Activated T-helper 1 cell treated with anti-CD3 and anti-CD28 coated beads, Interleukin-12 subunit alpha, Interleukin-12 subunit beta, Interleukin-2, Interleukin-4 antibody, amounts not matched to agents 30 ng/mL and 10 ng/mL and 1 ng/mL, durations not matched to agents 14 hours and 24 hours and 36 hours (primary cell): ENCODE measurements at regions of chr9 and their contacts with region 1.

Region 1: GRCh38 chr9:19493174-19493811 is 84.5 kb downstream of the ACER2 start:
- DNase-seq: peak; percentile 25
- H3K4me3 Mint-ChIP-seq: peak overlapping the region; percentile 9
- H3K27ac Mint-ChIP-seq: no peak overlapping the region
- H3K4me1 Mint-ChIP-seq: peaks cover 17% of the 10 kb centered on the region
- H3K27me3 Mint-ChIP-seq: peaks cover 12% of the 10 kb centered on the region

Region 2: GRCh38 chr9:19116107-19116790 is 377.0 kb before region 1 on chr9:
- intact Hi-C with region 1: no loop called
- DNase-seq: no peak
- H3K4me3 Mint-ChIP-seq: no peak overlapping the region
- H3K27ac Mint-ChIP-seq: no peak overlapping the region
- H3K4me1 Mint-ChIP-seq: no peaks in the 10 kb centered on the region
- H3K27me3 Mint-ChIP-seq: no peaks in the 10 kb centered on the region

Region 3: DNA sequence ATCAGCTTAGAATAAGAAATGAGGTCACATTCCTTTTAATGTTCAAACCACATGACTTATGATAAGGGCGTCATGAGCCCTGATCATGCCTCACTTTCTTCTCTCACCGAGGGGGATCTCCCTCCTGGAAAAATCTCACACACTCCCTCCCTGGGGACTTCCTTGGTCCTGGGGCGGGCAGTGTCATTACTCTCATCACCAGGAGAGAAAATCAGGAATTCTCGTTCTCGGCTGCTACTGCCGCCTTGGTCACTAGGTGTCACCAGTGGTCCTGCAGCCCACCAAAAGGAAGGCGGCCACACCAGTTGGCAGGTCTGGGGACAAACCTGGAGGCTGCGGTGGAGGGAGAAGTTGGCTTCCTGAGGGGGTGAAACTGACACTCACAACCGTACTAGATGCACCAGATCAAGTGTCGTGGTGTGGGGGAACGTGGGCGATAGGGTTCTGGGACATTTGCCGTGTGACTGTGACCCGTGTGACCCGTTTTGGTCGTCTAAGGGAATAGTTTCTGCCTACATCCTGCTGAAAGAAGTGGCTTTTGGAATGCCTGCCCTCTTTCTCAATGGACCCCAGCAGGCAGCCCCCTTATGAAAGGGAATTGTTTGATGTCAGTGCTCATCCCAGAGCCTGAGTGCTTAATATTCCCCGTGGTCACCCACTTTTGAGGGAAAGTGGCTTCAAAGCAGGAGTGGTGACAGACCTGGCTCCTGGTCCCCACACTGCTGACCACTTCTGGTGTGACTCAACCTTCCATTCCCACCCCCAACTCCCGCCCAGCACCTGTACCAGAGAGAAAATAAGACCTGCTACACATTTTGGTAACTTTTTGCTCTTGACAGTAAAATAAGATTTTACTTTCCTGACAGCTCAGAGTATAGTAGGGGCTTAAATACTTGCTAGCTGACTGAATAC is 21.3 kb before region 1 on chr9:
- intact Hi-C with region 1: loop called (anchors 1 kb)
- DNase-seq: no peak
- H3K4me3 Mint-ChIP-seq: no peak overlapping the region
- H3K27ac Mint-ChIP-seq: peak overlapping the region; percentile 4
- H3K4me1 Mint-ChIP-seq: peaks cover 19% of the 10 kb centered on the region
- H3K27me3 Mint-ChIP-seq: peaks cover 15% of the 10 kb centered on the region

Region 4: GRCh38 chr9:19517202-19517942 is 24.1 kb after region 1 on chr9:
- intact Hi-C with region 1: loop called (anchors 1 kb)
- DNase-seq: no peak
- H3K4me3 Mint-ChIP-seq: no peak overlapping the region
- H3K27ac Mint-ChIP-seq: no peak overlapping the region
- H3K4me1 Mint-ChIP-seq: peaks cover 27% of the 10 kb centered on the region
- H3K27me3 Mint-ChIP-seq: peaks cover under 1% of the 10 kb centered on the region

Region 5: GRCh38 chr9:19665146-19665863 is 172.0 kb after region 1 on chr9:
- intact Hi-C with region 1: loop called (anchors 10 kb)
- DNase-seq: peak; percentile 2
- H3K4me3 Mint-ChIP-seq: no peak overlapping the region
- H3K27ac Mint-ChIP-seq: peak overlapping the region; percentile 27
- H3K4me1 Mint-ChIP-seq: peaks cover 10% of the 10 kb centered on the region
- H3K27me3 Mint-ChIP-seq: peaks cover 3% of the 10 kb centered on the region

Region 6: GRCh38 chr9:19748278-19749126 is 255.2 kb after region 1 on chr9:
- intact Hi-C with region 1: loop called (anchors 10 kb)
- DNase-seq: peak; percentile 9
- H3K4me3 Mint-ChIP-seq: no peak overlapping the region
- H3K27ac Mint-ChIP-seq: no peak overlapping the region
- H3K4me1 Mint-ChIP-seq: peaks cover 22% of the 10 kb centered on the region
- H3K27me3 Mint-ChIP-seq: peaks cover 14% of the 10 kb centered on the region

Region 7: DNA sequence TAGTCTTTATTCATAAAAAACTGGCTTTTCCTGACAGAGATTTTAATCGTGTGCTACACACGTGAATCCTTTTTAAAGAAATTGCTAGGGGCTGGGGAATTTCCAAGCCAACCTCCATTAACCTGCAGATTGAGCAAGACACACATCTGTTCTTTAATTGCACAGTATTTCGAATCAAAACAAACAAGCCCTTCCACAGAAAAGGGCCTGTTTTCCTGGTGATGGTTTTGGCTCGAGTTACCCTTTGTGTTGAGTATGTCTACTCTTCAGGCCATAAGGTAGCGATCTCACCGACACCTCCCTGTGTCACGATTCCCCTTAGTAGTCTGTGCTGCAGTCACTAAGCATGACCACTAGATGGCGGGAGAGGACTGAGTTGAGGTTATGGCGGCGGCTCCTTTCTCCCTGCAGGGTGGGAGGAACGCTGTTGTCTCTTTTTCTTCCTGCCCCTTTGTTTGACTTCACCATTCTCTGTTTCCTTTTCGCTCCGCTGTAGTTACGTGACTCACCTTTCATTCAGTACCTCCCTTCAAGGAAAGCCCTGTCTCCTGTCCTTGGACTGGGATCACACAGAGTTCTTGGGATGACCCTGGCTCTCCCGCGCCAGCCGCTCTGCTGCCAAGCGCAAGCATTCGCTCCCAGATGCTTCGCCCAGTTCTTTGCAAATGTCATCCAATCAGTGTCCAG is 432.7 kb after region 1 on chr9:
- intact Hi-C with region 1: loop called (anchors 2 kb)
- DNase-seq: peak; percentile 79
- H3K4me3 Mint-ChIP-seq: peak overlapping the region; percentile 65
- H3K27ac Mint-ChIP-seq: peak overlapping the region; percentile 2
- H3K4me1 Mint-ChIP-seq: peaks cover 28% of the 10 kb centered on the region
- H3K27me3 Mint-ChIP-seq: peaks cover 2% of the 10 kb centered on the region